Right lobe of liver (tissue), 6 donors: ENCODE measurements at regions of chr12 and their contacts with region 1.

Region 1: GRCh38 chr12:22856178-22856577 is 231.2 kb downstream of the ETNK1 start:
- DNase-seq: no peak
- ATAC-seq: peak in 3 of 4 donors; percentile 52 to 57 (median 54)
- H3K4me3 ChIP-seq: no peak overlapping the region
- H3K27ac ChIP-seq: no peak overlapping the region
- H3K4me1 ChIP-seq: no peaks in the 10 kb centered on the region
- H3K27me3 ChIP-seq: no peaks in the 10 kb centered on the region
- CTCF ChIP-seq: peak; percentile 60 to 77 (median 68)
- POLR2A ChIP-seq: no peak

Region 2: DNA sequence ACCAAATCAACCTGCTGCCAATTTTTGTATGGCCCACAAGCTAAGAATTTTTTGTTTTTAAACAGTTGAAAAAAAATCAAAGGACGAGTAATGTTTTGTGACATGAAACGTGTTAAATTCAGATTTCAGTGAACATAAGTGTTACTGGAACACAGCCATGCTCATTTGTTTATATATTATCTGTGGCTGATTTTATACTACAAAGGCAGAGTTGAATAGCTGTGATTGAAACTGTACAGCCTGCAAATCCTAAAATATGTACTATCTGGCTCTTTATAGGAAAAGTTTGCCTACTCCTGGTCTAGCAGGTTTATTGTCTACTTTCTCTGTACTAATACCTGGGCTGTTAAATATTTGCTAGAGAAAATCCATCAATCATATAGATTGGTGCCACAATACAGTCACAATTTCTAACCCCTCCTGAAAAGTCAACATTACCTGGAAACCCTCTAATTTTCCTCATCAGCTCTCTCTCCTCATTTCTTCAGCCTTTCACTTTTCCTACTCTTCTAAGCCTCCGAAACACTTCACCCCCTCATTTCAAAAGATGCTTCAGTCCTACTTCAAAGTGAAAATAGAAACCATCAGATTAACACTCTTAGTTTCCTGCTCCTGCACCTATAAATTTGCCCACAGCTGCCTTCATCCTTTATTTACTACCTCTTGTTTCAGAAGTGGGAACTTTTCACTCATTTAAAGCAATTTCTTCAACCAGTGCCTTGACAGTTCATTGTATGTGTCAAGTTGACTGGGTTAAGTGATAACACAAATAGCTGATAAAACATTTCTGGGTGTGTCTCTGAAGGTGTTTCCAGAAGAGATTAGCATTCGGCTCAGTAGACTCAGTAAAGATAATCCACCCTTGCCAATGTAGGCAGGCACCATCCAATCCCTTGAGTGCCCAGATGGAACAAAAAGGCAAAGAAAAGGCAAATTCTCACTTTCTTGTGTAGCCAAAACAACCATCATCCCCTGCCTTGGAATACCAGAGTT is 293.8 kb before region 1 on chr12:
- intact Hi-C with region 1: no loop called
- DNase-seq: no peak
- ATAC-seq: no peak
- H3K4me3 ChIP-seq: no peak overlapping the region
- H3K27ac ChIP-seq: no peak overlapping the region
- H3K4me1 ChIP-seq: no peaks in the 10 kb centered on the region
- H3K27me3 ChIP-seq: no peaks in the 10 kb centered on the region
- CTCF ChIP-seq: no peak
- POLR2A ChIP-seq: no peak

Region 3: GRCh38 chr12:23055004-23055403 is 198.8 kb after region 1 on chr12:
- intact Hi-C with region 1: loop called in 1 of 2 experiments (anchors 10 kb)
- DNase-seq: peak in 2 of 3 donors; percentile 29 to 52
- ATAC-seq: peak; percentile 69 to 85 (median 82)
- H3K4me3 ChIP-seq: no peak overlapping the region
- H3K27ac ChIP-seq: no peak overlapping the region
- H3K4me1 ChIP-seq: no peaks in the 10 kb centered on the region
- H3K27me3 ChIP-seq: no peaks in the 10 kb centered on the region
- CTCF ChIP-seq: peak; percentile 57 to 71 (median 63)
- POLR2A ChIP-seq: no peak